ENCODE measurements at regions of chr12 and their contacts with region 1.

Region 1: GRCh38 chr12:66409195-66409871 is 107.0 kb downstream of the HELB start:
- DNase-seq: no peak
- ATAC-seq: peak in 1 of 2 donors; percentile 32
- H3K4me3 ChIP-seq: no peak overlapping the region
- H3K27ac ChIP-seq: no peak overlapping the region
- H3K4me1 ChIP-seq: no peaks in the 10 kb centered on the region
- H3K27me3 ChIP-seq: no peaks in the 10 kb centered on the region

Region 2: GRCh38 chr12:66269757-66270383 is 139.5 kb before region 1 on chr12:
- intact Hi-C with region 1: loop called in 3 of 4 experiments (anchors 5 to 10 kb)
- DNase-seq: peak in 1 of 3 donors; percentile 46
- ATAC-seq: peak; percentile 40 to 51
- H3K4me3 ChIP-seq: no peak overlapping the region
- H3K27ac ChIP-seq: no peak overlapping the region
- H3K4me1 ChIP-seq: no peaks in the 10 kb centered on the region
- H3K27me3 ChIP-seq: no peaks in the 10 kb centered on the region

Region 3: DNA sequence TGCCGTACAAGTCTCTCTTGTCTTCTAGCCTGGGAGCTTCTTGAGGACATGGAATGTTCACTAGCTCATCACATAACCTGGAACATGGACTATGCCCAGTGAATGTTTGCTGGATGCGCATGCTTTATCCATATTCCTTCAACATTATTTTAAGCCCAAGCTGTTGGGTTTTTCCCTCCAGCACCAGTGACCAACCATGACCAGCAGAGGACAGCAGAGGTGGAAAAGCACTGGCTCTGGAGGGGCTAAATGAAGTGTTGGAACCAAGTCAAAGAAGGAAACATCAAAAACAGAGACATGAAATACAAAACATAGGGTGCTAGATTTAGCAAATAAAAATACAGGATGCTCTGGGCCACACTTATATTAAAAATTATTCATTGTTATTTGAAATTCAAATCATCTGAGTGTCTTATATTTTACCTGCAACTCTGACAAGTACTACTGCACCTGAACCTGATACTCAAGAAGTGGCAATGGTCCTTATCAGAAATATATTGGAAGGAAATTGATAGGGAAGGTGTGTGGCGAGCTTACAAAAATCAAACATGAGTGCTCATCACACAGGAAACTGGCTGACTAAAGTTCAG is 130.1 kb before region 1 on chr12:
- intact Hi-C with region 1: loop called (anchors 5 to 10 kb)
- DNase-seq: no peak
- ATAC-seq: no peak
- H3K4me3 ChIP-seq: no peak overlapping the region
- H3K27ac ChIP-seq: no peak overlapping the region
- H3K4me1 ChIP-seq: no peaks in the 10 kb centered on the region
- H3K27me3 ChIP-seq: no peaks in the 10 kb centered on the region

Region 4: GRCh38 chr12:66288121-66288520 is 121.2 kb before region 1 on chr12:
- intact Hi-C with region 1: loop called in 1 of 4 experiments (anchors 10 kb)
- DNase-seq: no peak
- ATAC-seq: no peak
- H3K4me3 ChIP-seq: no peak overlapping the region
- H3K27ac ChIP-seq: no peak overlapping the region
- H3K4me1 ChIP-seq: no peaks in the 10 kb centered on the region
- H3K27me3 ChIP-seq: no peaks in the 10 kb centered on the region

Region 5: DNA sequence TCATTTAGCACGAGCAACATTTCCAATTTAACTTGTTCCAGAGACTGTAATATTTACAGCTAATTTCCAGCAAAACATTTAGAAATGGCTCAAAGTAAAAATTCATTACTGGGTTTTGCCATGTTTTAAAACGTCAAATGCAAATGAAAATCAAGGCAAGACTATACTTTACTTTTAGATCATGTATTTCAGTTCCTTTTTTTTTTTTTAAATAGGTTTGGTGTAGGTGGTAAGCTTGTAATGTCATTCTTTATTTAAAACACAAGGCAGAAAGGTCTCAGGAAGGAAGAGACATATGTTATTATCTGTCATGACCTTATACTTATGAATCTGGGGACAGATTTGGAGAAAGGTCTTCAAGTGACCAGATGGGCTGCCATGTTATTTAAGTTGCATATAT is 215.5 kb after region 1 on chr12:
- intact Hi-C with region 1: no loop called
- DNase-seq: no peak
- ATAC-seq: no peak
- H3K4me3 ChIP-seq: no peak overlapping the region
- H3K27ac ChIP-seq: no peak overlapping the region
- H3K4me1 ChIP-seq: no peaks in the 10 kb centered on the region
- H3K27me3 ChIP-seq: no peaks in the 10 kb centered on the region